ENCODE measurements at regions of chr5 and their contacts with region 1.

Region 1: DNA sequence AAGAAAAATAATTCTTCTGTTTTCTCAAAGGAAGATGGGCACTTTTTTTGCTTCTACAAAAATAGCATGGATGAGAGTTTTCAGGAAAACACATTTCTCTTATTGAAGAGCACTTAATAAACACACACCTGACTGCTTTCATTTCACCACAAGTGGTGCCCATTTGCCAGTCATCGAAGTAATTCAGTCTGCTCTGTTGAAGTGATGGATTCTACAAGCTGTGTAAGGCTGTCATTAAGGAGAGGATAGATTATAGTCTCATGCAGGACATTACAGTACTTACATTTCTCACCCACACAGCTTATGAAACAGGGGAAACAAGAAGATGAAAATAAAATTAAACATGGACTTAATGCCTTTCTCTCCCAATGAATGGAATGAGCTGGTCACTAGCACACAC is 165.2 kb downstream of the NR2F1-AS1 start:
- DNase-seq: no peak
- ATAC-seq: no peak
- H3K4me3 ChIP-seq: no peak overlapping the region
- H3K27ac ChIP-seq: no peak overlapping the region
- H3K4me1 ChIP-seq: no peaks in the 10 kb centered on the region
- CTCF ChIP-seq: no peak
- EP300 ChIP-seq: no peak
- POLR2A ChIP-seq: no peak
- RAD21 ChIP-seq: no peak

Region 2: GRCh38 chr5:93322974-93323860 is 92.6 kb before region 1 on chr5:
- CTCF ChIA-PET with region 1: no interaction called
- POLR2A ChIA-PET with region 1: no interaction called
- DNase-seq: no peak
- ATAC-seq: no peak
- H3K4me3 ChIP-seq: no peak overlapping the region
- H3K27ac ChIP-seq: no peak overlapping the region
- H3K4me1 ChIP-seq: no peaks in the 10 kb centered on the region
- CTCF ChIP-seq: no peak
- EP300 ChIP-seq: no peak
- POLR2A ChIP-seq: no peak
- RAD21 ChIP-seq: no peak

Region 3: GRCh38 chr5:93359296-93359958 is 56.4 kb before region 1 on chr5:
- CTCF ChIA-PET with region 1: no interaction called
- POLR2A ChIA-PET with region 1: no interaction called
- DNase-seq: peak in 1 of 2 experiments; percentile 16
- ATAC-seq: no peak
- H3K4me3 ChIP-seq: no peak overlapping the region
- H3K27ac ChIP-seq: peak overlapping the region in 1 of 2 experiments; percentile 43; a peak in 3 of 6 replicates
- H3K4me1 ChIP-seq: peaks cover 10% of the 10 kb centered on the region
- CTCF ChIP-seq: no peak
- EP300 ChIP-seq: no peak
- POLR2A ChIP-seq: no peak
- RAD21 ChIP-seq: no peak

Region 4: DNA sequence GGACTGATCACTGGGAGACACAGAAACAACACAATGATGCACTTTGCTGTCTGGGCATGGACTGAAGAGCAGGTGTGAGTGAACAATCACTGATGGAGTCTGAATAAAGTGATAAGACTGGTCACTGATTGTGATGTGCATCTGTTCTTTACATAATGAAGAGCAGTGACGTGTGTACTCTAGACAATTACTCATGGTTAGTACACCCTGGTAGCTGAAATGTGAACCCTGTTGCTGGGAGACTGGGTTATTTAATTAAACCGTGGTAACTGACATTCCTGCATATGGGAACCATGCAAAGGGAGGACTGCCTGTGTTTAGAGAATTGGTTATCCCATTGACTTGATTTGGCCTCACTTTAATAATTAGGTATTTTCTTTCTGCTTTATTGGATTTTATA is 37.7 kb before region 1 on chr5:
- CTCF ChIA-PET with region 1: no interaction called
- POLR2A ChIA-PET with region 1: no interaction called
- DNase-seq: no peak
- ATAC-seq: no peak
- H3K4me3 ChIP-seq: no peak overlapping the region
- H3K27ac ChIP-seq: no peak overlapping the region
- H3K4me1 ChIP-seq: no peaks in the 10 kb centered on the region
- CTCF ChIP-seq: no peak
- EP300 ChIP-seq: no peak
- POLR2A ChIP-seq: no peak
- RAD21 ChIP-seq: no peak

Region 5: DNA sequence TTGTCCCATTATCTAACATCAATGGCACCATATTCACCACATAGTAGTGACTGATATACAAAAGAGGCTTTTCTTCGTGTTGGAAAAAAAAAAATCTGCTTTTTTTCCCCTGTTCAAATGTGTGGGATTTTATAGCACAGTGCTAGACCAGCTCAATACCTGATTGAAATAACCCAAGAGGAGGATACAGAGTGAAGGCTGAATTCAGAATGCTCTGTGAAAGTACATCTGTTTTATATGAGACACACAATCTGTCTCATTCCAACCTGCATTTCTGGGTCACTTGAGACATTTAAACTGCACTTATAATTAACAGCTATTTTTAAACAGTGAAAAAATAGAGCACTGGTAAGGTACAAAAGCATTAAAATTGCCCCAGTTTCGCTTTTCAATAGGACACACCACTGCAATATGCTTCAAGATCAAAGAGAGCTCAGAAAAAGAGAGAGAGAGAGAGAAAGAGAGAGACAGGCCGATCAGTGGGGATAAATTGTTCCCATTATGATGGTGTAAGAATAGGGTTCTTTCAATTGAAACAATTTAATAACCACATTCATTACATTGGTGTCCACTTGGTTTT is 14.1 kb before region 1 on chr5:
- CTCF ChIA-PET with region 1: interaction called, 10 read pairs
- POLR2A ChIA-PET with region 1: no interaction called
- DNase-seq: no peak
- ATAC-seq: no peak
- H3K4me3 ChIP-seq: no peak overlapping the region
- H3K27ac ChIP-seq: no peak overlapping the region
- H3K4me1 ChIP-seq: no peaks in the 10 kb centered on the region
- CTCF ChIP-seq: no peak
- EP300 ChIP-seq: no peak
- POLR2A ChIP-seq: no peak
- RAD21 ChIP-seq: no peak

Region 6: GRCh38 chr5:93452255-93452654 is 36.4 kb after region 1 on chr5:
- CTCF ChIA-PET with region 1: no interaction called
- POLR2A ChIA-PET with region 1: no interaction called
- DNase-seq: no peak
- ATAC-seq: no peak
- H3K4me3 ChIP-seq: no peak overlapping the region
- H3K27ac ChIP-seq: no peak overlapping the region
- H3K4me1 ChIP-seq: no peaks in the 10 kb centered on the region
- CTCF ChIP-seq: no peak
- EP300 ChIP-seq: no peak
- POLR2A ChIP-seq: no peak
- RAD21 ChIP-seq: no peak